WTC11 (cell line): ENCODE measurements at regions of chr9 and their contacts with region 1.

Region 1: GRCh38 chr9:38641985-38642864 is 21.8 kb upstream of the ANKRD18A start:
- DNase-seq: peak; percentile 55
- ATAC-seq: peak; percentile 62
- H3K4me3 Mint-ChIP-seq: no peak overlapping the region
- H3K27ac Mint-ChIP-seq: no peak overlapping the region
- H3K4me1 Mint-ChIP-seq: peaks cover 25% of the 10 kb centered on the region
- H3K27me3 Mint-ChIP-seq: no peaks in the 10 kb centered on the region; the same call in 1 of the 2 replicates
- CTCF ChIP-seq: peak; percentile 67

Region 2: GRCh38 chr9:38243993-38244392 is 398.2 kb before region 1 on chr9:
- CTCF ChIA-PET with region 1: no interaction called
- POLR2A ChIA-PET with region 1: no interaction called
- DNase-seq: no peak
- ATAC-seq: no peak
- H3K4me3 Mint-ChIP-seq: no peak overlapping the region
- H3K27ac Mint-ChIP-seq: no peak overlapping the region
- H3K4me1 Mint-ChIP-seq: no peaks in the 10 kb centered on the region; the same call in 1 of the 2 replicates
- H3K27me3 Mint-ChIP-seq: peaks cover 48% of the 10 kb centered on the region
- CTCF ChIP-seq: no peak

Region 3: DNA sequence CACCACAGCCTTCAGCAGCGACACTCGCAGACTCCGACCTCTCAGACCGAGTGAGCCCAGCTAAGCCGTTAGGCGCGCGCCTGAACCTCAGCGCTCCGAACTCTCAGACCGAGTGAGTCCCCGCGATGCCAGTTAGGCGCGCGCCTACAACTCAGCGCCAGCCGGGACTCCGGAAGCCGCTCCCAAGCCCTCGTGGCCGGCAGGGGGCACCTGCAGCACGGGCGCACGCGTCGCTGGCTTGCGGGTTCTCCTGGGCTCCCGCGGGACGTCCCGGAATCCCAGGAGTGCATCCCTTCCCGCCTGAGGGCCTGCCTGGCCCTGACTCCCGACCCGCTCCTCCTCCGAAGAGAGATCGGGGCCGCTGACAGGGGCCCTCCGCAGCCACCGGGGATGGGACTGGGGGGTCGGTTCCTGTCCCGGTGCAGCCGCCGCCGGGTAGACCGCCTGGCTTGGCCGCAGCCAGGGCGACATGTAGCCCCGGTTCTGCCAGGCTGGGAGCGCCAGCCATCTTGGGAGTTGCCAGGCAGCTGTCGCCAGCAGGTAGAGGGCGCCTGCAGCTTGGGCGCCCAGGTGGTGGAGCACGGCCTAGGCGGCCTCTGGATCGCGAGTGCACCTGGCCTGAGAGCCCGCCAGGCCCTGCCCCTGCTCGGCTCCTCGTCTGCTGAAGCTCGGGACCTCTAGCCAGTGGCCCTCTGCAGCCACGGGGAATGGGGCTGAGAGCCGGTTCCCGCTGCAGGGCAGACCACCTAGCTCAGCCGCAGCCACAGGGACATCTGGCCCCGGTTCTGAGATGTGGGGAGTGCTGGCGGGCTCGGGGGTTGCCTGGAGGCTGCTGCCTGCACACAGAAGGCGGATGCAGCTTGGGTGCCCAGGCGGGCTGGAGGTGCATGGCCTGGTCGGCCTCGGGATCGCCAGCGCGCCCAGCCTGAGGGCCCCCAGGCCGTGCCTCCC is 21.5 kb before region 1 on chr9 and contains the start of gene ANKRD18A:
- CTCF ChIA-PET with region 1: interaction called, 15 read pairs
- POLR2A ChIA-PET with region 1: no interaction called
- DNase-seq: peak; percentile 96
- ATAC-seq: peak; percentile 85
- H3K4me3 Mint-ChIP-seq: peak within 1 kb of the TSS; percentile 88
- H3K27ac Mint-ChIP-seq: peak within 1 kb of the TSS; percentile 76; the same call in 1 of the 2 replicates
- H3K4me1 Mint-ChIP-seq: peaks cover 12% of the 10 kb centered on the region
- H3K27me3 Mint-ChIP-seq: peaks cover 46% of the 10 kb centered on the region
- CTCF ChIP-seq: peak; percentile 46
- total RNA-seq, gene ANKRD18A: 10.8 to 15.7 TPM (median 12.9 TPM) in 3 replicates

Region 4: GRCh38 chr9:38659538-38659937 is 17.3 kb after region 1 on chr9:
- CTCF ChIA-PET with region 1: no interaction called
- POLR2A ChIA-PET with region 1: no interaction called
- DNase-seq: no peak
- ATAC-seq: no peak
- H3K4me3 Mint-ChIP-seq: no peak overlapping the region
- H3K27ac Mint-ChIP-seq: no peak overlapping the region
- H3K4me1 Mint-ChIP-seq: peaks cover 13% of the 10 kb centered on the region
- H3K27me3 Mint-ChIP-seq: no peaks in the 10 kb centered on the region
- CTCF ChIP-seq: no peak

Region 5: GRCh38 chr9:38727497-38728001 is 85.3 kb after region 1 on chr9:
- CTCF ChIA-PET with region 1: interaction called, 10 read pairs
- POLR2A ChIA-PET with region 1: no interaction called
- DNase-seq: peak; percentile 59
- ATAC-seq: peak; percentile 97
- H3K4me3 Mint-ChIP-seq: no peak overlapping the region
- H3K27ac Mint-ChIP-seq: peak overlapping the region; percentile 88
- H3K4me1 Mint-ChIP-seq: peaks cover 7% of the 10 kb centered on the region
- H3K27me3 Mint-ChIP-seq: no peaks in the 10 kb centered on the region; the same call in 1 of the 2 replicates
- CTCF ChIP-seq: no peak